Transverse colon (tissue), 4 donors: ENCODE measurements at regions of chr3 and their contacts with region 1.

Region 1: GRCh38 chr3:172522871-172523818 is at the start of gene TNFSF10:
- DNase-seq: peak; percentile 87
- H3K4me3 ChIP-seq: peak within 1 kb of the TSS; percentile 35 to 56 (median 48)
- H3K27ac ChIP-seq: peak within 1 kb of the TSS; percentile 82 to 94 (median 89)
- H3K4me1 ChIP-seq: peaks cover 17 to 48% (median 30%) of the 10 kb centered on the region in 4 donors
- H3K27me3 ChIP-seq: no peaks in the 10 kb centered on the region
- CTCF ChIP-seq: no peak
- EP300 ChIP-seq: no peak
- POLR2A ChIP-seq: peak; percentile 97
- total RNA-seq, gene TNFSF10: 73.8 to 150 (median 125) TPM

Region 2: DNA sequence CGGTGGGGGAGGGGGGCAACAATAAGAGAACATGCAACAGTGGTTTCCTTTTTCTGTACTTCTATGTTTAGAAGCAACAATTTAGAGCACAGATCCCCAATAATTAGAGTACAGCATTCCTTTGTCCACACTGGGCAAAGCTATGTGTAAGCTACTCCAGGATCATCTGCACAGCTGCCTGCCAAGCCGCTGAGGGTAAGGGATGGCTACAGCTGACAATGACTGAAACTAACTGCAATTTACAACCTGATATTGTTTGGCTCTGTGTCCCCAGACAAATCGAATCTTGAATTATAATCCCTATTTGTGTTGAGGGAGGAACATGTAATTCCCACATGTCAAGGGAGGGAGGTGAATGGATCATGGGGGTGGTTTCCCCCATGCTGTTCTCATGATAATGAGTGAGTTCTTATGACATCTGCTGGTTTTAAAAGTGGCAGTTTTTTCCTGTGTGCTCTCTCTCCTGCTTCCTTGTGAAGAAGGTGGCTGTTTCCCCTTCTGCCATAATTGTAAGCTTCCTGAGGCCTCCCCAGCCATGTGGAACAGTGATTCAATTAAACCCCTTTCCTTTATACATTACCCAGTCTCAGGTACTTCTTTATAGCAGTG is 54.9 kb after region 1 on chr3:
- in situ Hi-C with region 1: no loop called
- intact Hi-C with region 1: loop called (anchors 10 kb)
- DNase-seq: no peak
- H3K4me3 ChIP-seq: no peak overlapping the region
- H3K27ac ChIP-seq: no peak overlapping the region
- H3K4me1 ChIP-seq: peaks cover 0 to 29% (median 4%) of the 10 kb centered on the region in 4 donors
- H3K27me3 ChIP-seq: no peaks in the 10 kb centered on the region
- CTCF ChIP-seq: no peak
- EP300 ChIP-seq: no peak
- POLR2A ChIP-seq: no peak

Region 3: DNA sequence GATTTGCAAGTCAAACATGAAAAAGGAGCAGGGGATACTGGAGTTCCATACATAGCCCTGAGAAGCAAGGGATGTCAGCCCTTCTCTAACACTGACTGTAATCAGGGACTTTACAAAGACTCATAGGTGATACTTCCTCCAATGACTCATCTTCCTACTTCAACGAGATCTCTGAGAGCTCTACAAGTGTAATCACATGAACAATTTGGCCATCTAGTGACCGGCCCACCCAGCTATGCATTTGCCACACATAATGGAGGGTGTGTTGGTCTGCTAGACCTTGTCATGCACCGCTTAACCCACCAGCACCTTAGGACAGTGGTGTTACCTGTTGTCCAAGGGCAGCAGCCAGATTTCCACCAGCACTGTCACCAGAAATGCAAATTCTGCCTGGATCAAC is 112.4 kb after region 1 on chr3:
- in situ Hi-C with region 1: no loop called
- intact Hi-C with region 1: no loop called
- DNase-seq: no peak
- H3K4me3 ChIP-seq: no peak overlapping the region
- H3K27ac ChIP-seq: no peak overlapping the region
- H3K4me1 ChIP-seq: peaks cover 0 to 8% (median 0%) of the 10 kb centered on the region in 4 donors
- H3K27me3 ChIP-seq: no peaks in the 10 kb centered on the region
- CTCF ChIP-seq: no peak
- EP300 ChIP-seq: no peak
- POLR2A ChIP-seq: no peak